ENCODE measurements at regions of chr5 and their contacts with region 1.

Region 1: GRCh38 chr5:43040287-43041098 is at the start of gene ANXA2R:
- DNase-seq: peak; percentile 88 to 98 (median 93)
- ATAC-seq: peak; percentile 58
- H3K4me3 ChIP-seq: peak within 1 kb of the TSS; percentile 86 to 87
- H3K4me3 Mint-ChIP-seq: peak within 1 kb of the TSS; percentile 93
- H3K27ac ChIP-seq: peak within 1 kb of the TSS; percentile 93 to 94
- H3K27ac Mint-ChIP-seq: peak within 1 kb of the TSS; percentile 98
- H3K4me1 ChIP-seq: peaks cover 27% of the 10 kb centered on the region
- H3K4me1 Mint-ChIP-seq: peaks cover 56% of the 10 kb centered on the region
- H3K27me3 ChIP-seq: no peaks in the 10 kb centered on the region
- H3K27me3 Mint-ChIP-seq: no peaks in the 10 kb centered on the region
- CTCF ChIP-seq: peak; percentile 79
- total RNA-seq, gene ANXA2R: 38.2 to 39.5 TPM

Region 2: GRCh38 chr5:42950440-42951292 is 89.8 kb before region 1 on chr5:
- CTCF ChIA-PET with region 1: interaction called, 27 read pairs
- POLR2A ChIA-PET with region 1: interaction called, 179 read pairs
- intact Hi-C with region 1: loop called (anchors 1 kb)
- DNase-seq: peak; percentile 26 to 90 (median 72)
- ATAC-seq: peak; percentile 43
- H3K4me3 ChIP-seq: peak overlapping the region; percentile 72 to 83
- H3K4me3 Mint-ChIP-seq: peak overlapping the region; percentile 94
- H3K27ac ChIP-seq: peak overlapping the region; percentile 93 to 94
- H3K27ac Mint-ChIP-seq: peak overlapping the region; percentile 99
- H3K4me1 ChIP-seq: peaks cover 20% of the 10 kb centered on the region
- H3K4me1 Mint-ChIP-seq: peaks cover 34% of the 10 kb centered on the region
- H3K27me3 ChIP-seq: no peaks in the 10 kb centered on the region
- H3K27me3 Mint-ChIP-seq: no peaks in the 10 kb centered on the region
- CTCF ChIP-seq: no peak

Region 3: DNA sequence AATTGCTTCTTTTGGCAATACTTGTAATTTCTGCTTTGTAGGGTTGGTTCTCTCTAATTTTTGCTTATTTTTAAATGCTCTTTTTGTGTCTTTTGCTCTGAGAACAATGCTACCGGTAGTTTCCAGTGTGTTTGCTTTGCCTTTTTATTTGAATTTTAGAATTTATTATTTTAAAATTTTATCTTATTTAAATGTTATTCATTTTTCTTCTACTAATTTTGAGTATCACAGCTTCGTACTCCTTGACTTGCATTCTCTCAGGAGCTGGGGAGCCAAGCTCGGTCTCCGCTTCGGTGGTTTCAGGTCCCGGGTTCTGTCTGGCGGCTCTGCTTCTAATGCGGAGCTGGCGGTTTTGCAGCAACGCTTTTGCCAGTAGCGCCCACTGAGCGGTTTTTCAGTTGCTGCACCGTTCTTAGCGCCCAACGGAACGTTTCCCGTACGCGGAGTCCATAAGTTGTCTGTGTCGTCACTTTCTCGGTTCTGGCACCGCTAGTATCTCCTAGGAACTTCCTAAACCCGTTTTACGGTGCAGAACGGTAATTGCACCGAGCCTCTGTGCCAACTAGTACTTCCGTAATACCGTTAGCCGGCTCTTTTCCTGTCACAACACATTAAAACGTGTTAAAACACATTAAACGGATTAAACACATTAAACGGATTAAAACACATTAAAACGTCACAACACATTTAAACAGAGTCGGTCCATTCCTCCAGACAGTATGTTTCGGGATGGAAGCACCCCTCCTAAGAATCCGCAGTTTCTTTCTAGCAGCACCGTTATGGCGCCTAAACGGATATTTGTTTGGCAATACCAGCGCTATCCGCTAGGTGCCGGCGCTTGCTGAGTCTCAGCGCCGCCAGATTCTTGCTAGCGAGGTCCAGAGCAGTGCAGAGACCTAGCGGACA is 46.0 kb before region 1 on chr5:
- CTCF ChIA-PET with region 1: interaction called, 85 read pairs
- POLR2A ChIA-PET with region 1: interaction called, 506 read pairs
- intact Hi-C with region 1: loop called (anchors 1 kb)
- DNase-seq: peak; percentile 75 to 94 (median 88)
- ATAC-seq: peak; percentile 63
- H3K4me3 ChIP-seq: peak overlapping the region; percentile 78 to 92
- H3K4me3 Mint-ChIP-seq: peak overlapping the region; percentile 99
- H3K27ac ChIP-seq: peak overlapping the region; percentile 97
- H3K27ac Mint-ChIP-seq: peak overlapping the region; percentile 100
- H3K4me1 ChIP-seq: peaks cover 23% of the 10 kb centered on the region
- H3K4me1 Mint-ChIP-seq: peaks cover 41% of the 10 kb centered on the region
- H3K27me3 ChIP-seq: no peaks in the 10 kb centered on the region
- H3K27me3 Mint-ChIP-seq: no peaks in the 10 kb centered on the region
- CTCF ChIP-seq: peak; percentile 93

Region 4: GRCh38 chr5:43019614-43020293 is 20.7 kb before region 1 on chr5:
- CTCF ChIA-PET with region 1: interaction called, 84 read pairs
- POLR2A ChIA-PET with region 1: interaction called, 583 read pairs
- intact Hi-C with region 1: loop called (anchors 1 kb)
- DNase-seq: peak; percentile 69 to 96 (median 84)
- ATAC-seq: peak; percentile 66
- H3K4me3 ChIP-seq: peak overlapping the region; percentile 70 to 73
- H3K4me3 Mint-ChIP-seq: peak overlapping the region; percentile 98
- H3K27ac ChIP-seq: peak overlapping the region; percentile 97 to 98
- H3K27ac Mint-ChIP-seq: peak overlapping the region; percentile 100
- H3K4me1 ChIP-seq: peaks cover 40% of the 10 kb centered on the region
- H3K4me1 Mint-ChIP-seq: peaks cover 43% of the 10 kb centered on the region
- H3K27me3 ChIP-seq: no peaks in the 10 kb centered on the region
- H3K27me3 Mint-ChIP-seq: no peaks in the 10 kb centered on the region
- CTCF ChIP-seq: peak; percentile 71

Region 5: GRCh38 chr5:43027054-43027785 is 13.3 kb before region 1 on chr5:
- CTCF ChIA-PET with region 1: interaction called, 13 read pairs
- POLR2A ChIA-PET with region 1: interaction called, 583 read pairs
- intact Hi-C with region 1: no loop called
- DNase-seq: no peak
- ATAC-seq: no peak
- H3K4me3 ChIP-seq: no peak overlapping the region
- H3K4me3 Mint-ChIP-seq: no peak overlapping the region
- H3K27ac ChIP-seq: no peak overlapping the region
- H3K27ac Mint-ChIP-seq: no peak overlapping the region
- H3K4me1 ChIP-seq: peaks cover 4% of the 10 kb centered on the region
- H3K4me1 Mint-ChIP-seq: peaks cover 27% of the 10 kb centered on the region
- H3K27me3 ChIP-seq: no peaks in the 10 kb centered on the region
- H3K27me3 Mint-ChIP-seq: no peaks in the 10 kb centered on the region
- CTCF ChIP-seq: no peak

Region 6: DNA sequence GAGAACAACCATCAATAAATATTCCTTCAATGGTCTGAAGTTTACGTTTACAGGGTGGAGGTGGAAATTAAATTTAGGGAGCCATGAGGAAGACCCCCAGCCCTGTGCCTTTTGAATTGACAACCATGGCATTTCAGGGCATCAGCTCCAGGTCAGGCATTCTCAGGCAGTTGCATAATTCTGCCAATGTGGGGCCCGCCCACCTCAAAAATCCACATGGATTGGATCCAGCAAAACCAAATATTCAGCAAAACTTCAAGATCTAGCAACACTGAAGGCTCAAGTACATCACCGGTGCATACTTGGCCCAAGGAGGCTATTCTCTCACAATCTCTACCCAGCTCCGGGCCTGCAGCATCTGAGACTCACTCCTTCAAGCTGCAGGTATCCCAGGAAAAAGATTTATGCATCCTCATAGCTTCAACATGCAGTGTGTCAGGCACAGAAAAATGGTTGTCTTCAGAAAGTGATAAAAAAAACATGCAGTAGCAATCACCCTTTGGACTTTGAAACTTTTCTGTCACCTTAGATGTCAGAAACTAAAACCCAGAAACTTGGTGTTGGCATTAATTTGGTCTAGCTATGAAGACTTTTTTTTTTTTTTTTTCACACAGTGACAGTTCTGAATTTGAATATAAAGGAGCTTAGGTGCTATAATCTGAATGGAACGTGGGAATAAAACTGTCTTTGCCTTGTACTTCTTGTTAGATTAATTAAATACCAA is 21.0 kb after region 1 on chr5:
- CTCF ChIA-PET with region 1: interaction called, 84 read pairs
- POLR2A ChIA-PET with region 1: interaction called, 339 read pairs
- intact Hi-C with region 1: loop called (anchors 1 kb)
- DNase-seq: no peak
- ATAC-seq: no peak
- H3K4me3 ChIP-seq: no peak overlapping the region
- H3K4me3 Mint-ChIP-seq: no peak overlapping the region
- H3K27ac ChIP-seq: no peak overlapping the region
- H3K27ac Mint-ChIP-seq: peak overlapping the region; percentile 70
- H3K4me1 ChIP-seq: no peaks in the 10 kb centered on the region
- H3K4me1 Mint-ChIP-seq: peaks cover 13% of the 10 kb centered on the region
- H3K27me3 ChIP-seq: no peaks in the 10 kb centered on the region
- H3K27me3 Mint-ChIP-seq: no peaks in the 10 kb centered on the region
- CTCF ChIP-seq: no peak

Region 7: GRCh38 chr5:43396762-43397304 is 356.3 kb after region 1 on chr5:
- CTCF ChIA-PET with region 1: no interaction called
- POLR2A ChIA-PET with region 1: no interaction called
- intact Hi-C with region 1: no loop called
- DNase-seq: peak; percentile 40 to 80 (median 60)
- ATAC-seq: peak; percentile 93
- H3K4me3 ChIP-seq: peak overlapping the region; percentile 66 to 86
- H3K4me3 Mint-ChIP-seq: peak overlapping the region; percentile 94
- H3K27ac ChIP-seq: peak overlapping the region; percentile 77 to 78
- H3K27ac Mint-ChIP-seq: peak overlapping the region; percentile 96
- H3K4me1 ChIP-seq: peaks cover 18% of the 10 kb centered on the region
- H3K4me1 Mint-ChIP-seq: peaks cover 39% of the 10 kb centered on the region
- H3K27me3 ChIP-seq: no peaks in the 10 kb centered on the region
- H3K27me3 Mint-ChIP-seq: no peaks in the 10 kb centered on the region
- CTCF ChIP-seq: no peak